ENCODE measurements at regions of chr12 and their contacts with region 1.

Region 1: DNA sequence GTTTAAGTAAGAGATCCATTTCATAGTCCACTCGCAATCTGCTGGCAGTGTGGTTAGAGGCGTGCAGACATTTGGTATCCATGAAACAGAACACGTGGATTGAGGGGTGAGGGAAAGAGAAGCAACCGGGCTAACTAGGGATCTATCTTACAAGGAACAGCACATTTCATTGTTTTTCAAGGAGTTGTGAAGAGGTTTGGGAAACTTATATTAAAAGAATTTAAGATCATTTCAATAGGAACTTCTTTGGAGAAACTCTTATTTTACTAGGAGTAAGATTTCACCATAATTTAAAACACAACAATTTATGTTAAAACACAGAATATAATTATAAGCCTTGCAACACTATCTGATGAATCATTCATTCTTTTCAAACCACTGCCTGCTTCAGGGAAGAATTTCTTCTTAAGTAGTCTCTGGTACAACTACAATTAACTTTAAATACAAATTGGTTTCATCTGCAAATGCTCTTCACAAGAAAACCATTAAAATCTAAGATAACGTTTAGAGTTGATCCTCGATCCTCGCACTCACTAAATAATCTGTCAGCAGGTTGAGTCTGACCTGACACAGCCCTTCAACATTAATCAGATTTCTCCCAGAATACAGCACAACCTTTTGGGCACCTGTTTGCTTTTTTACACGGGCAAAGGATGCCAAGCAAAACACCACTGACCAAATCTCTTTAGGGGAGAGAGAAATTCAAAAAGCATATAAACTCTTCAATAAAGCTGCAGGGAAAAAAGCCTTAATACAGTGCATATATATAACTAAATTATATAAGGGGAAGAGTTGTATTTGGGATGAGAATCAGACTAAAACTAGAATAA is 27.3 kb downstream of the PPTC7 start:
- DNase-seq: no peak
- H3K4me3 ChIP-seq: no peak overlapping the region
- H3K27ac ChIP-seq: no peak overlapping the region
- H3K4me1 ChIP-seq: peaks cover 3% of the 10 kb centered on the region
- CTCF ChIP-seq: no peak

Region 2: GRCh38 chr12:110583137-110584059 is 27.6 kb after region 1 on chr12 and contains the start of gene PPTC7:
- CTCF ChIA-PET with region 1: no interaction called
- POLR2A ChIA-PET with region 1: interaction called, 11 read pairs
- intact Hi-C with region 1: no loop called
- DNase-seq: peak; percentile 99
- H3K4me3 ChIP-seq: peak within 1 kb of the TSS; percentile 86
- H3K27ac ChIP-seq: peak within 1 kb of the TSS; percentile 57
- H3K4me1 ChIP-seq: peaks cover 57% of the 10 kb centered on the region
- CTCF ChIP-seq: no peak
- total RNA-seq, gene PPTC7: 8.3 and 11.4 TPM in 2 replicates

Measured in OCI-LY7 (cell line).